Activated naive CD4-positive, alpha-beta T cell treated with anti-CD3 and anti-CD28 coated beads for 36 hours (primary cell): ENCODE measurements at regions of chr20 and their contacts with region 1.

Region 1: GRCh38 chr20:51306503-51307358 is 235.8 kb downstream of the NFATC2 start:
- DNase-seq: peak; percentile 83
- H3K4me3 Mint-ChIP-seq: no peak overlapping the region
- H3K27ac Mint-ChIP-seq: no peak overlapping the region
- H3K4me1 Mint-ChIP-seq: no peaks in the 10 kb centered on the region
- H3K27me3 Mint-ChIP-seq: peaks cover 8% of the 10 kb centered on the region

Region 2: DNA sequence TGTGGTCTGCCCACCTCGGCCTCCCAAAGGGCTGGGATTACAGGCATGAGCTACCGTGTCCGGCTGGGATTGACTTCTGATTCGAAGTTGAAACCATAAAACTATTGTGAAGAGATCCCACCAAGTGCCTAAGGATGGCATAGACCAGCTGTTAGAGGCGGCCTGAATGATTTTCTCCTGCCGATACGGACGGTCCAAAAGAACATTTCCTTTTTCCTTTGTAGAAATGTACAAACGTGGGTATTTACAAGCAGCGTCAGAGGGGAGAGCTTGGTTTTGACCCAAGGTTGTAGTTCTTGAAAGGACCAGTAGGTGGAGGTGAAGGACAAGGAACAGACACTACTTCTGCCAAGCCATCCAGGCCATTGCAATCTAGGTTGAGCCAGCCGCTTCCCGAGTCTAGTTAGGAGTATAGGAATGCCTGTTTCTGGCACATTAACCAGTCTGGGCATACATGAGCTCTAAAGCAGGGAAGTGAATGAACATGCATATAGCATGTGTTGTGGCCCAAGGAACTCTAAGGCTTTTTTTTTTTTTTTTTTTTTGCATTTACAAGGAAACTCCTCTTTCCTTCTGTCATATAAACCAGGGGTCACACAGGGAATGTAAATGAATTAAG is 319.0 kb before region 1 on chr20:
- CTCF ChIA-PET with region 1: interaction called, 211 read pairs
- intact Hi-C with region 1: loop called (anchors 1 kb)
- DNase-seq: peak; percentile 78
- H3K4me3 Mint-ChIP-seq: no peak overlapping the region
- H3K27ac Mint-ChIP-seq: no peak overlapping the region
- H3K4me1 Mint-ChIP-seq: no peaks in the 10 kb centered on the region
- H3K27me3 Mint-ChIP-seq: peaks cover 23% of the 10 kb centered on the region

Region 3: DNA sequence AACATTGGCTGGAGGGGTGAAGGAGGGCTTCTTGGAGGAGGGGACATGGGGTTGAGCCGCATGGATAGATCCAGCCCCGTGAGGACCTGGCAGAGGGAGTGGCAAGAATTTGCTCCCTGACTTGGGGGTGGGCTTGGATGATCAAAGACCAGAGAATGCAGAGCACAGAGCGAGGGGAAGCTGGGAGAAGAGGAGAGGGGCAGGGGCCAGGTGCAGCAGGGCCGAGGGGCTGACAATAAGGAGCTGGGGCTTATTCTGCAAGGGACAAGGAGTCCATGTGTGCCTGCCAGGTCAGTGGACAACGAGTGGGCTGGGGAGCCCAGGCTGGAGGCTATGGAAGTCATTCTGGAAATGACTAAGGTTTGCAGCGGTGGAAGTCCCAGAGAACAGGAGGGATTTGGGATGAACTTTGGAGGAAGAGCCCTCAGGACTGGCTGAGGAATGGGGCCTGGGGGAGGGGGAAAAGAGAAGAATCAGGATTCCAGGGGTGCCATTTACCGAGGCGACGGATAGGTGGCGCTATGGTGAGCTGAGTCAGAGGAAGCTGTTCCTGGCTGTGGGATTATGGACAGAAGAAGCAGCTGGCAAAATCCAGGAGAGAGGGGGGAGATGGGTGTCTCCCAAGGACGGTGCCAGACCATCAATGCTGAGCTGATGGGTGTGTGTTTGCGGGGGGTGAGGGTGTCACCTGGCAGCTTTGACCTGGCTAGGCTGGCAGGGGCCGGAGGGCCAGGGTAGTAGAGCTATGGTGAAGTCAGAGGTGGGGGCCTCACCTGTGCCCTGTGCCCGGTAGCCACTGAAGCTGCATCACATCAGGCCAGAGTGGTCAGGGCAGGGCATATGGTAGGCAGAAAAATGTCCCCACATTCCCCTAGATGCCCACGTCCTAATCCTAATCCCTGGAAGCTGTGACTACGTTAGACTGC is 291.7 kb before region 1 on chr20:
- CTCF ChIA-PET with region 1: interaction called, 10 read pairs
- intact Hi-C with region 1: no loop called
- DNase-seq: peak; percentile 64
- H3K4me3 Mint-ChIP-seq: no peak overlapping the region
- H3K27ac Mint-ChIP-seq: no peak overlapping the region
- H3K4me1 Mint-ChIP-seq: no peaks in the 10 kb centered on the region
- H3K27me3 Mint-ChIP-seq: peaks cover 23% of the 10 kb centered on the region

Region 4: GRCh38 chr20:51220293-51220706 is 86.4 kb before region 1 on chr20:
- CTCF ChIA-PET with region 1: interaction called, 15 read pairs
- intact Hi-C with region 1: loop called (anchors 1 kb)
- DNase-seq: peak; percentile 76
- H3K4me3 Mint-ChIP-seq: no peak overlapping the region
- H3K27ac Mint-ChIP-seq: no peak overlapping the region
- H3K4me1 Mint-ChIP-seq: peaks cover 15% of the 10 kb centered on the region
- H3K27me3 Mint-ChIP-seq: peaks cover 56% of the 10 kb centered on the region

Region 5: DNA sequence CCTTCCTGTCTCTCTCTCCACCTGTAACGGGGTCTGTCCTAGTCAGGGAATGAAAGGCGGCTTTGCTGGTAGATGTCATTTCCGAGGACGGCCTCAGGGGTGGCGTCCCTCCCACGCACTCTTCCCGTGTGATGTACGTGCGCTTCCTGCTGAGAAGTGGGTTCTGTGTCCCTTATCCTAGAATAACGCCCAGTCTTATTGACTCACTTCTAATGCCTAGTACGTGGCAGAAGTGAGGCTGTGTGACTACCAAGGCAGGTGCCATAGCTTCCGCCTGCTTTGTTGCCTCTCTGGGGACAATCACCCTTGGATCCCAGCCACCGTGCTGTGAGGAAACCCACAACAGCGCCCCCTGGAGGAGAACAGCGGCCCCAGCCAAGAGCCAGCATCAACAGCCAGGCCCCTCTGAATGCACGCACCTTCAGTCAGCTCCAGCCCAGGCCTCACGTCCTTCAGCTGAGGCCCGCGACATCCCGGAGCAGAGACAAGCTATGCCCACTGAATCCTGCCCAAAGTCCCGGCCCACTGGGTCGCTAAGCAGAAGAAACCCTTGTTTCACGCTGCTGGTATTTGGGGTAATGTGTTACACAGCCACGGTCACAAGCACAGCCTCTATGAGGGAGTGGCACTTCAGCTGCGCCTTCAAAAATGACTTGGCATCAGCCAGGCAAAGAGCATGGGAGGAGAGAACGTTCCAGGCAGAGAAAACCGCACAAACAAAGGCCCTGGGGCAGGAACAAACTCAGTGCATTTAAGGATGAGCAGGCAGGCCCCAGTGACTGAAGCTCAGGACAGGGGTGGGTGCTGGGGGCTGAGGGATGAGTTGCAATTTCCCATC is 11.5 kb after region 1 on chr20:
- CTCF ChIA-PET with region 1: interaction called, 32 read pairs
- intact Hi-C with region 1: no loop called
- DNase-seq: peak; percentile 68
- H3K4me3 Mint-ChIP-seq: peak overlapping the region; percentile 25
- H3K27ac Mint-ChIP-seq: no peak overlapping the region
- H3K4me1 Mint-ChIP-seq: no peaks in the 10 kb centered on the region
- H3K27me3 Mint-ChIP-seq: peaks cover 4% of the 10 kb centered on the region

Region 6: DNA sequence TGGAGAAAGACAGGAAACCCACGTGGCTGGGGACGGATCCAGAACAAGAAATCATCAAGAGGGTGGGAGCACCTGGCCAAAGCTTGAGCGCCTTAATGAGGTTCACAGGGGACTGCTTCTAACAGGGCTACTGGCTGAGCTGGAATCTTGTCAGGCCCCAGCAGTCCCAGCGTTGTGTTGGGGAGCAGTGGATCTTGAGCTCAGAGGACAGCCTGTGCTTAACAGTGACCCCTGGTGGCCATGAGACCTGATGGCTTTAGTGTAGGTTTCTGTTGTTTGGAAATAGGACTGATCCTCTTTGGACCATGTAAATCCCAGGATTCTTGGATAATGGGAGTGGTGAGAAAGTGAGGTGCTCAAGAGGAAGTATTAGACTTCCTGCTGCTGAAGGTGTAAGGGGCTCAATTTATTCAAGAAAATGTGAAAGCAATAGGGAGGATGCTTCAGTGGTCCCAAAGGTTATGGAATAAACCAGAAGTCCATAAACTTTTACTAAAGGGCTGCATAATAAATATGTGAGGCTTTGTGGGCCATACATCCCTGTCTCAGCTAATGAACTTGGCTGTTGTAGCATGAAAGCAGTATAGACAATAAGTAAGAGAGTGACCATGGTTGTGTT is 19.6 kb after region 1 on chr20:
- CTCF ChIA-PET with region 1: interaction called, 32 read pairs
- intact Hi-C with region 1: no loop called
- DNase-seq: peak; percentile 62
- H3K4me3 Mint-ChIP-seq: no peak overlapping the region
- H3K27ac Mint-ChIP-seq: no peak overlapping the region
- H3K4me1 Mint-ChIP-seq: no peaks in the 10 kb centered on the region
- H3K27me3 Mint-ChIP-seq: peaks cover 5% of the 10 kb centered on the region

Region 7: GRCh38 chr20:51331481-51331880 is 24.8 kb after region 1 on chr20:
- CTCF ChIA-PET with region 1: interaction called, 32 read pairs
- intact Hi-C with region 1: no loop called
- DNase-seq: no peak
- H3K4me3 Mint-ChIP-seq: no peak overlapping the region
- H3K27ac Mint-ChIP-seq: no peak overlapping the region
- H3K4me1 Mint-ChIP-seq: no peaks in the 10 kb centered on the region
- H3K27me3 Mint-ChIP-seq: peaks cover 3% of the 10 kb centered on the region